ENCODE measurements at regions of chr12 and their contacts with region 1.

Region 1: GRCh38 chr12:3299929-3300832 is 190.8 kb upstream of the PRMT8 start:
- DNase-seq: peak; percentile 85 to 93
- H3K4me3 ChIP-seq: peak overlapping the region in 3 of 4 experiments; percentile 7 to 42 (median 11); a peak in 3 of 8 replicates
- H3K27ac ChIP-seq: no peak overlapping the region
- H3K4me1 ChIP-seq: peaks cover 0 to 13% (median 4%) of the 10 kb centered on the region in 4 experiments; a peak in 5 of 7 replicates
- H3K27me3 ChIP-seq: peaks cover 0 to 4% (median 2%) of the 10 kb centered on the region in 4 experiments; a peak in 2 of 7 replicates
- CTCF ChIP-seq: peak in 2 of 3 experiments; percentile 97 to 98; a peak in 3 of 4 replicates
- EP300 ChIP-seq: peak in 1 of 2 experiments; percentile 33; a peak in 1 of 3 replicates
- POLR2A ChIP-seq: no peak
- RAD21 ChIP-seq: peak; percentile 93 to 98

Region 2: DNA sequence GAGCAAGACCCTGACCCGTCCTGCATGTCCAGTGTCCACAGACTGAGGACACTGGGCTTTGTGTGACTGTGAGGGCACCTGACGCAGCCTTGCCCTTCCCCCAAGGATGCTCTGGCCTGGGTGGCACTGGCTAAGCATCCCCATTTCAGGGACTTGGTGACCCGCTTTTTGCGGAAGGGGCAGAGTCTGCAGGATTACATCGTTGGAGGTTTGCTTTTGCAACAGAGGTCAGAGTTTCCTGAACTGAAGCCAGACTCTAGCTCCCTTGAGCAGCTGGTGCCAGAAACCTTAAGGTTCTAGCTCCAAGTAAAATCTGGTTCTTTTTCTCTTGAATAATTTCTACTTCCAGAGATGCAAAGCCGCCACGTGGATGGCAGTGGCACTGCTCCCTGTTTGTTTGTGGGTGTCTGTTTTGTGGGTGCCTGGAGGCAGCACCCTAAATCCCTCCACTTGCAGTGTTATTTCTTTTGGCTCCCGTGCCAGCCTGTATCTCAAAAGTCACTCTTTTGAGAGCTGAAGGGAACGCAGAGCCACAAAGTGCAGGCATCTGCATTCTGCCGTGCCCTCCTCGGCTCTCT is 38.3 kb before region 1 on chr12:
- CTCF ChIA-PET with region 1: interaction called, 19 read pairs
- POLR2A ChIA-PET with region 1: interaction called, 3 read pairs
- DNase-seq: no peak
- H3K4me3 ChIP-seq: no peak overlapping the region
- H3K27ac ChIP-seq: no peak overlapping the region
- H3K4me1 ChIP-seq: no peaks in the 10 kb centered on the region
- H3K27me3 ChIP-seq: no peaks in the 10 kb centered on the region
- CTCF ChIP-seq: no peak
- EP300 ChIP-seq: no peak
- POLR2A ChIP-seq: no peak
- RAD21 ChIP-seq: no peak

Region 3: GRCh38 chr12:3326156-3326849 is 26.1 kb after region 1 on chr12:
- CTCF ChIA-PET with region 1: interaction called, 166 read pairs
- POLR2A ChIA-PET with region 1: interaction called, 3 read pairs
- DNase-seq: no peak
- H3K4me3 ChIP-seq: no peak overlapping the region
- H3K27ac ChIP-seq: no peak overlapping the region
- H3K4me1 ChIP-seq: no peaks in the 10 kb centered on the region; a peak in 1 of 7 replicates
- H3K27me3 ChIP-seq: no peaks in the 10 kb centered on the region
- CTCF ChIP-seq: peak; percentile 69 to 82 (median 70)
- EP300 ChIP-seq: no peak
- POLR2A ChIP-seq: no peak
- RAD21 ChIP-seq: peak; percentile 57 to 68

Region 4: GRCh38 chr12:3371018-3371417 is 70.8 kb after region 1 on chr12:
- CTCF ChIA-PET with region 1: interaction called, 14 read pairs
- POLR2A ChIA-PET with region 1: no interaction called
- DNase-seq: no peak
- H3K4me3 ChIP-seq: no peak overlapping the region
- H3K27ac ChIP-seq: no peak overlapping the region
- H3K4me1 ChIP-seq: peaks cover 0 to 2% (median 0%) of the 10 kb centered on the region in 4 experiments; a peak in 1 of 7 replicates
- H3K27me3 ChIP-seq: peaks cover 5 to 19% (median 18%) of the 10 kb centered on the region in 4 experiments
- CTCF ChIP-seq: no peak
- EP300 ChIP-seq: no peak
- POLR2A ChIP-seq: no peak
- RAD21 ChIP-seq: no peak

Region 5: GRCh38 chr12:3507361-3507760 is 207.2 kb after region 1 on chr12:
- CTCF ChIA-PET with region 1: interaction called, 12 read pairs
- POLR2A ChIA-PET with region 1: interaction called, 3 read pairs
- DNase-seq: no peak
- H3K4me3 ChIP-seq: no peak overlapping the region
- H3K27ac ChIP-seq: no peak overlapping the region
- H3K4me1 ChIP-seq: no peaks in the 10 kb centered on the region; a peak in 1 of 7 replicates
- H3K27me3 ChIP-seq: peaks cover 0 to 7% (median 0%) of the 10 kb centered on the region in 4 experiments; a peak in 1 of 7 replicates
- CTCF ChIP-seq: no peak
- EP300 ChIP-seq: no peak
- POLR2A ChIP-seq: no peak
- RAD21 ChIP-seq: no peak

Region 6: GRCh38 chr12:3667485-3667884 is 367.3 kb after region 1 on chr12:
- CTCF ChIA-PET with region 1: interaction called, 12 read pairs
- POLR2A ChIA-PET with region 1: no interaction called
- DNase-seq: no peak
- H3K4me3 ChIP-seq: no peak overlapping the region
- H3K27ac ChIP-seq: no peak overlapping the region
- H3K4me1 ChIP-seq: 0 out of 7 replicates have a peak, but pooled peaks cover 0 to 2% (median 0%) of the 10 kb centered on the region in 4 experiments
- H3K27me3 ChIP-seq: no peaks in the 10 kb centered on the region
- CTCF ChIP-seq: peak; percentile 13 to 52 (median 44)
- EP300 ChIP-seq: no peak
- POLR2A ChIP-seq: no peak
- RAD21 ChIP-seq: peak in 1 of 2 experiments; percentile 50; a peak in 3 of 4 replicates